Activated CD4-positive, alpha-beta T cell treated with anti-CD3 and anti-CD28 coated beads, Interleukin-2, amount 10 ng/mL, durations not matched to agents 24 days and 14 days (primary cell): ENCODE measurements at regions of chr6 and their contacts with region 1.

Region 1: DNA sequence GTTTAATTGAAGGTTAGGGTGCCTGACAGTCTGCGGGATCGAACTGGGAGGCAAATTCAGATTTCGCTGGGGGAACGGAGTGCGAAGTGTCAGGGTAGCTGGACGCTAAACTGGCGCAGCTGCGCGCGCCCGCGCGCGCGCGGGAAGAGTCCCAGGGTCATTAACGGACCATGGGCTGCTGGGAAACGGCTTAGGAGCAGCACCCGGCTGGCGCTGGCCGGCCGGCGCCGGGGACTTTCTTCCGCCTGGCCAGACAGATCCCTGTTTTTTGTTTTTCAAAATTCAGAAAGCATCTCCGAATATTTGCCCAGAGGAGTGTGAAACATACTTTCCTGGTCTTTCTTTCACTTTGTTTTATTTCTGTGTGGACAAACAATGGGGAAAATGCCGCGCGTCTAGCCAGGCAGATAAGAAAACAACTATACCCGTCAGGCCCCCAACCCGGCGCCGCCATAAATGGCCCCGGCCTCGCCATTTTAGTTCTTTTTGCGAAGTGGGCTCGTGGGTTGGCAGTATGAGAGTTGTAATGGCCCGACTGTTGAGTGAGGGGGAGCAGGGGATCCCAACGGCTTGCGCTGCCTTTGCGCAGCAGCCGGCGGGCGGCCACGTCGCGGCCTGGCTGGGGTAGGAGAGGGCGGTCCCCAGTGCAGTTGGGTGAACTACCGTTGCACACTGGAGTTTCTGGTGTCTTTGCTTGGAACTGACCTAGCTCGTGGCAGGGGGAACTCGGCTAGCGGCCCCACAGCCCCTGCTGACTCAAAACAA is 7.1 kb downstream of the HSPA1B start:
- DNase-seq: peak; percentile 93
- H3K4me3 Mint-ChIP-seq: peak overlapping the region; percentile 97
- H3K27ac Mint-ChIP-seq: peak overlapping the region; percentile 96
- H3K4me1 Mint-ChIP-seq: peaks cover 34% of the 10 kb centered on the region
- H3K27me3 Mint-ChIP-seq: no peaks in the 10 kb centered on the region

Region 2: DNA sequence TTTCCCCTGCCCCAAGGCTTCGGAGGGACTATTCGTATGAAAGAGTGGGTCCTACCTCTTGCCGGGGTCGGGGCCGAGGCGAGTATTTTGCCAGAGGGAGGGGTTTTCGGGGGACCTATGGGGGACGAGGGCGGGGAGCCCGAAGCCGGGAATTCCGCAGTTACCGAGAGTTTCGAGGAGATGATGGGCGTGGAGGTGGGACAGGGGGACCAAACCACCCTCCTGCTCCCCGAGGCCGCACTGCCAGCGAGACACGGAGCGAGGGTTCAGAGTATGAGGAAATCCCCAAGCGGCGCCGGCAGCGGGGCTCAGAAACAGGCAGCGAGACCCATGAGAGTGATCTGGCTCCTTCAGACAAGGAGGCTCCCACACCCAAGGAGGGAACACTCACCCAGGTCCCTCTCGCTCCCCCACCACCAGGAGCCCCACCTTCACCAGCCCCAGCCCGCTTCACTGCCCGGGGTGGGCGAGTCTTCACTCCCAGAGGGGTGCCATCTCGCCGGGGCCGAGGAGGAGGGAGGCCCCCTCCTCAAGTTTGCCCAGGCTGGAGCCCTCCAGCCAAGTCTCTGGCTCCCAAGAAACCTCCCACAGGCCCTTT is 202.8 kb before region 1 on chr6:
- intact Hi-C with region 1: no loop called
- DNase-seq: no peak
- H3K4me3 Mint-ChIP-seq: no peak overlapping the region
- H3K27ac Mint-ChIP-seq: no peak overlapping the region
- H3K4me1 Mint-ChIP-seq: peaks cover 11% of the 10 kb centered on the region
- H3K27me3 Mint-ChIP-seq: no peaks in the 10 kb centered on the region

Region 3: GRCh38 chr6:31901953-31902643 is 67.5 kb after region 1 on chr6 and contains the start of gene ZBTB12:
- intact Hi-C with region 1: loop called (anchors 2 kb)
- DNase-seq: peak; percentile 96
- H3K4me3 Mint-ChIP-seq: peak within 1 kb of the TSS; percentile 91
- H3K27ac Mint-ChIP-seq: peak within 1 kb of the TSS; percentile 91
- H3K4me1 Mint-ChIP-seq: peaks cover 31% of the 10 kb centered on the region
- H3K27me3 Mint-ChIP-seq: peaks cover 6% of the 10 kb centered on the region
- total RNA-seq, gene ZBTB12: 3.7 and 4.6 TPM in 2 replicates

Region 4: DNA sequence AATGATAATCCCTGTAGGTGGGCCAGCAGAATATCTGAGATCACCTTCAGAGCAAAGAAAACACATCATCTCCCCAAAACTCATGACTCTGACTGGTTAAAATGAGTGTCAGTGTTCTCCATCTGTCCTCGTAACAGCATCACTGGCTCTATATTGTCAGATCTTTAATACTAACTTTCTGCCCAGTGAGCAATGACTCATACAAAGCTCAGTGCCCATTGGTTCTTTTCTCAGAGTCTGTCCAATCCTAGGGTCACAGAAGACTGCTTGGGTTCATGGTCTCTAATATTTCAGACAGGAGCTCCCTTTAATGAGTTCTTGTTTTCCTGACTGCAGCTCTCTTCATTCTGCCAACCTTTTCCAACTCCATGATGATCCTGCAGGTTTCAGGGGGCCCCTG is 1277.5 kb after region 1 on chr6:
- intact Hi-C with region 1: no loop called
- DNase-seq: peak; percentile 78
- H3K4me3 Mint-ChIP-seq: no peak overlapping the region
- H3K27ac Mint-ChIP-seq: no peak overlapping the region
- H3K4me1 Mint-ChIP-seq: peaks cover 6% of the 10 kb centered on the region
- H3K27me3 Mint-ChIP-seq: peaks cover 82% of the 10 kb centered on the region